HepG2 (cell line): ENCODE measurements at regions of chr6 and their contacts with region 1.

Region 1: GRCh38 chr6:41519745-41520699 is 26.2 kb upstream of the FOXP4 start:
- DNase-seq: peak; percentile 97
- ATAC-seq: peak; percentile 93
- H3K4me3 ChIP-seq: peak overlapping the region in 2 of 3 experiments; percentile 8 to 50; a peak in 2 of 6 replicates
- H3K27ac ChIP-seq: peak overlapping the region; percentile 94
- H3K4me1 ChIP-seq: peaks cover 88% of the 10 kb centered on the region
- H3K27me3 ChIP-seq: no peaks in the 10 kb centered on the region
- CTCF ChIP-seq: peak; percentile 1; the same call in 1 of the 2 replicates
- EP300 ChIP-seq: peak in 1 of 2 experiments; percentile 98; a peak in 2 of 4 replicates
- POLR2A ChIP-seq: peak; percentile 74 to 77; a peak in 3 of 4 replicates
- RAD21 ChIP-seq: peak; percentile 45

Region 2: DNA sequence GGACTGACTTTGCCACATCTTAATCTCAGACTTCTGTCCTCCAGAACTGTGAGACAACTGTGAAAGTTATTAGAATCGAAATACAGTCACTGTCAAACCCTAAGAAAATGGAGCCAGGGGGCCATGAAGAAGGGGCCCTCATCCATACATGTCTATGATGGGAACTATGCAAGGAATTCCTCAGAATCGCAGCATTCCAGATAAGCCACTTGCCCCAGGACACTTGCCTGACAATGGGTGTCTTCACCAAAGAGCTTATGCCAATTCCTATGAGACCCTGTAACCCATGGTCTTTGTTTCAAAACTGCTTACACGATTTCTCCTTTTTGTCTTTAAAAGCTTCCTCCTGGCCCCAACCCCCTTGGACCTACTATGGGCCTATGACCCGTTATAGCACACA is 64.2 kb before region 1 on chr6:
- CTCF ChIA-PET with region 1: no interaction called
- POLR2A ChIA-PET with region 1: interaction called, 19 read pairs
- in situ Hi-C with region 1: no loop called
- intact Hi-C with region 1: no loop called
- DNase-seq: no peak
- ATAC-seq: no peak
- H3K4me3 ChIP-seq: no peak overlapping the region
- H3K27ac ChIP-seq: no peak overlapping the region
- H3K4me1 ChIP-seq: peaks cover 90% of the 10 kb centered on the region
- H3K27me3 ChIP-seq: peaks cover 10 to 36% of the 10 kb centered on the region in 2 experiments; a peak in 4 of 5 replicates
- CTCF ChIP-seq: no peak
- EP300 ChIP-seq: no peak
- POLR2A ChIP-seq: no peak
- RAD21 ChIP-seq: no peak

Region 3: GRCh38 chr6:41463062-41463930 is 56.7 kb before region 1 on chr6:
- CTCF ChIA-PET with region 1: no interaction called
- POLR2A ChIA-PET with region 1: interaction called, 12 read pairs
- in situ Hi-C with region 1: no loop called
- intact Hi-C with region 1: loop called (anchors 1 kb)
- DNase-seq: peak; percentile 77
- ATAC-seq: peak; percentile 92
- H3K4me3 ChIP-seq: peak overlapping the region in 1 of 3 experiments; percentile 24; a peak in 1 of 6 replicates
- H3K27ac ChIP-seq: no peak overlapping the region
- H3K4me1 ChIP-seq: peaks cover 58% of the 10 kb centered on the region
- H3K27me3 ChIP-seq: peaks cover 0 to 24% of the 10 kb centered on the region in 2 experiments
- CTCF ChIP-seq: peak; percentile 90
- EP300 ChIP-seq: no peak; a peak in 1 of 4 replicates
- POLR2A ChIP-seq: no peak
- RAD21 ChIP-seq: peak; percentile 95

Region 4: GRCh38 chr6:41497994-41498393 is 22.0 kb before region 1 on chr6:
- CTCF ChIA-PET with region 1: no interaction called
- POLR2A ChIA-PET with region 1: interaction called, 187 read pairs
- in situ Hi-C with region 1: no loop called
- intact Hi-C with region 1: loop called (anchors 1 kb)
- DNase-seq: no peak
- ATAC-seq: no peak
- H3K4me3 ChIP-seq: no peak overlapping the region
- H3K27ac ChIP-seq: no peak overlapping the region
- H3K4me1 ChIP-seq: peaks cover 88% of the 10 kb centered on the region
- H3K27me3 ChIP-seq: no peaks in the 10 kb centered on the region; a peak in 1 of 5 replicates
- CTCF ChIP-seq: no peak
- EP300 ChIP-seq: no peak
- POLR2A ChIP-seq: no peak
- RAD21 ChIP-seq: no peak

Region 5: DNA sequence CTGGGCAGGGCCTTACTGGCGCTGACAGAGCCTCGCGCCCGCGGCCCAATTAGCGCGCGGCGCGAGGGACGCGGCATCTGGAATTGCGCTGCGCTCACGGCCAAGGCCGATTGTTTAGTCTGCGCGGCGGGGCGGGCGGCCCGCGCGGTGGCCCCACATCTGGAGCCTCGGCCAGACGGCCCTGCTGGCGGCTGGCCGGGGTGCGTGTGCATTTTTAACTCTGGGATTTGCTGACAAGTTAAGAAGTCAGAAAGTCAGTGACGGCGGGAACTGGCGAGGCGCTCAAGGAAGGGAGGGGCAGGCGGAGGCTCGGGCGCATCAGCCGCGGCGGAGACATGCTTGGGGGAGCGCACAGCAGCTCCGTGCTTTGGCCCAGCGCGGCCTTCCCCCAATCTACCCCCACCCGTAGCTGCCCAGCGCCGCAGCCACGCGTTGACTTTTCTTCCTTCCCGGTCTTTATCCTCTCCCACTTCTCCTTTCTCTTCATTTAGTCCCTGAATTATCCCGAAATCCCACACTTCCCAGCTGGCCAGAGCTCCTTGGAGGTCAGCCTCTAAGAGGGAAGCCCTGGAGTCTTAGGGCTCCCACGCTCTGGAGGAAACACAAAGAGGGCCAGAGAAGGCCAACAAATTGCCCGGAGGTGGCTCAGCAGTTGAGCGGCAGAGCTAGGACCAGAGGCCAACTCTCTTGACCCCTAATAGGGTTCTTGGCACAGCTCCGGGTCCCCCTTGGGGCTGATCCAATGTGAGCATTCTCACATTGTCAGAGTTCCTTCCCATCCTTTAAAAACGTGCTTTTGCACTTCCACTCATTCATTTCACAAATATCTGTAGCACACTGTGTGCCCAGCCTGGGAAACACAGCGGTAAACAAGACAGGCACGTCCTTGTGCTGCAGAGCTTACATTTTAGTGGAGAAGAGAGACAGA is 14.6 kb before region 1 on chr6:
- CTCF ChIA-PET with region 1: no interaction called
- POLR2A ChIA-PET with region 1: interaction called, 187 read pairs
- in situ Hi-C with region 1: no loop called
- intact Hi-C with region 1: no loop called
- DNase-seq: no peak
- ATAC-seq: no peak
- H3K4me3 ChIP-seq: no peak overlapping the region
- H3K27ac ChIP-seq: no peak overlapping the region
- H3K4me1 ChIP-seq: peaks cover 76% of the 10 kb centered on the region
- H3K27me3 ChIP-seq: no peaks in the 10 kb centered on the region; a peak in 1 of 5 replicates
- CTCF ChIP-seq: no peak
- EP300 ChIP-seq: no peak
- POLR2A ChIP-seq: no peak
- RAD21 ChIP-seq: no peak

Region 6: DNA sequence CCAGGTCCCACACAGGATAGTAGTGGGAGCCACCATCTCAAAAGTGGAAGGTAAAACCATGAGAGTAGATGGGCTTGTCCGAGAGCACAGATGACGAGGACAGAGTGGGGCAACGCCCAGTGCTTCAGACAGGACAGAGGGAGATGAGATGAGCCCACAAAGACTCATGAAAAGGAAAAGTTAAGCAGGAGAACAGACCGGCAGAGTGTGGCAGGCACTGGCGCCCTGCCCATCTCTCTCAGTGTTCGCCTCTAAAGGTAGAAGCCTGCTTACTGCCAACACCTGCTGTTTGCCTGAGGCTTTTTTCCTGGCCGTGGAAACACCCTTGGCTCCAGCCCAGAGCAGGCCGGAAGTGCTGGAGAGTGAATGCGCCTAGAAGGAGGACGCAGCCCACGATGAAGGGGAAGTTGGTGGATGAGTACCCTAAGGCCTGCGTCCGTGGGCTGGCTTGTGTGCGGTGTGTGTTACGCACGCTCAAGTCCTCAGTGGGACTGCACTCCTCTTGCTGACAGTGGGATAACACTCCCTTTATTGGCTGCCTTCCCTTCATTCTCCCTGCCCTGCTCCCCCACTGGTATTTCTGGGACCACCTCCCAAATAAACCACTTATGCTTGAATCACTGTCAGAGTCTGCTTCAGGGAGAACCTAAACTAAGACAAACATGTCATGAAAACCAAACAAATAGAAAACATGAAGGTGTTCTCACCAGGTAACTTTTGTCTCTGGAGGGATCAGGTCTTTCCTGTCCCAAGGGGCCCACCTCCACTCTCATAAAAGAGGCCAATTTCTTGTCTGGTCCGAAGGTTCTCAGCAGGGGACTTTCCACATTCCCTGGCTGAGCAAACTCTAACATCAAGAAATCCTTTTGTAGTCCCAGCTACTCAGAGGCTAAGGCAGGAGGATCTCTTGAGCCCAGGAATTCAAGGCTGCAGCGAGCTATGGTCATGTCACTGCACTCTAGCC is 17.1 kb after region 1 on chr6:
- CTCF ChIA-PET with region 1: no interaction called
- POLR2A ChIA-PET with region 1: interaction called, 90 read pairs
- in situ Hi-C with region 1: no loop called
- intact Hi-C with region 1: no loop called
- DNase-seq: no peak
- ATAC-seq: no peak; the same call in 2 of the 3 replicates
- H3K4me3 ChIP-seq: no peak overlapping the region
- H3K27ac ChIP-seq: no peak overlapping the region
- H3K4me1 ChIP-seq: peaks cover 30% of the 10 kb centered on the region
- H3K27me3 ChIP-seq: no peaks in the 10 kb centered on the region
- CTCF ChIP-seq: no peak
- EP300 ChIP-seq: no peak
- POLR2A ChIP-seq: no peak
- RAD21 ChIP-seq: no peak

Region 7: GRCh38 chr6:41545703-41546474 is 25.9 kb after region 1 on chr6 and contains the start of gene FOXP4:
- CTCF ChIA-PET with region 1: no interaction called
- POLR2A ChIA-PET with region 1: interaction called, 90 read pairs
- in situ Hi-C with region 1: no loop called
- intact Hi-C with region 1: loop called (anchors 1 kb)
- DNase-seq: peak; percentile 91
- ATAC-seq: peak; percentile 75
- H3K4me3 ChIP-seq: peak within 1 kb of the TSS; percentile 67 to 99 (median 99)
- H3K27ac ChIP-seq: peak within 1 kb of the TSS; percentile 66
- H3K4me1 ChIP-seq: peaks cover 48% of the 10 kb centered on the region
- H3K27me3 ChIP-seq: no peaks in the 10 kb centered on the region
- CTCF ChIP-seq: 0 out of 2 replicates have a peak, but pooled peaks have one; percentile 8
- EP300 ChIP-seq: 0 out of 4 replicates have a peak, but pooled peaks of 1 of the 2 experiments have one; percentile 43
- POLR2A ChIP-seq: no peak
- RAD21 ChIP-seq: peak; percentile 47; the same call in 1 of the 2 replicates
- total RNA-seq, gene FOXP4: 11.0 TPM in 2 replicates